Activated naive CD4-positive, alpha-beta T cell treated with anti-CD3 and anti-CD28 coated beads for 36 hours (primary cell): ENCODE measurements at regions of chr15 and their contacts with region 1.

Region 1: GRCh38 chr15:88638626-88639372 is at the start of gene ISG20:
- DNase-seq: peak; percentile 99
- H3K4me3 Mint-ChIP-seq: peak within 1 kb of the TSS; percentile 81
- H3K27ac Mint-ChIP-seq: peak within 1 kb of the TSS; percentile 96
- H3K4me1 Mint-ChIP-seq: peaks cover 79% of the 10 kb centered on the region
- H3K27me3 Mint-ChIP-seq: no peaks in the 10 kb centered on the region
- total RNA-seq, gene ISG20: 51.2 to 56.5 TPM

Region 2: DNA sequence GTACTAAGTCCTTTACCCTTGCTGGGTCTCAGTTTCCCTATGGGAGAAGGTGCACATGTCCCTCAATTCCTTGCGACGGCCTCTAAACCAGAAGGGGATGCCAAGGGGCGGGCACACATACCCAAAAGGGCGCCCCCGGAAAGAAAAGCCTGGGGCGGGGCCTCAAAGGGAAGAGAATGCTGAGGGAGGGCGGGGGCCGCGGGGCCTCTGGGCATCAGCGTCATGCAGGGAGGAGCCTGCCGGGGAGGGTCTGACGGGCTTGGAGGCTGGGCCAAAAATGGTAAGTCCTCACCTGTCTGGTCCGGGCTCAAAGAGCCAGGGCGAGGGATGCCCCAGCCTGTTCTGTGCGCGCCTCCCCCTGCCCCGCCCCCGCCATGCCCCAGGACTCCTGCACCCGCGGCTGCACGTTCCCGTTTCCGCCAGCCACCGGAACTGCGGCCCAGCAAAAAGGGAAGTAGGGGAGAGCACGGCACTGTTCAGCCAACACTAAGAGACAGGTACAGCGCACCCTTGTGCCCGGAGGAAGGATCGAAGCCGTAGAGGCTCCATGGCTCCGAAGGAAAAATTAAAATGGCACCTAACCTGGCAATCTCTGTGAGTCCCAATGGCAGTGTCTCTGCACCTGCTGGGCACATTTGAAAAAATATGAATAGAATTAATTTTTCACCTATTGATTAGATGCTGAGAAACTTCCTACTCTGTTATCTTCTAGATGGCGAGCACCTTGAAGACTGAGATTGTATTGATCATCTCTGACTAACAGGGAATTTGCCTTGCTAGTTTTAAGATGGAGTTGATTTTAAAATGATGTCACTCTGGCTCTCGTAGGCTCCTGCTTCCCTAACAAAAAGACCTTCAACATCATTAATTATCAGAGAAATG is 92.3 kb before region 1 on chr15 and contains the start of gene DET1:
- CTCF ChIA-PET with region 1: no interaction called
- intact Hi-C with region 1: loop called (anchors 1 kb)
- DNase-seq: peak; percentile 98
- H3K4me3 Mint-ChIP-seq: peak within 1 kb of the TSS; percentile 90
- H3K27ac Mint-ChIP-seq: peak within 1 kb of the TSS; percentile 90
- H3K4me1 Mint-ChIP-seq: peaks cover 15% of the 10 kb centered on the region
- H3K27me3 Mint-ChIP-seq: no peaks in the 10 kb centered on the region
- total RNA-seq, gene DET1: 2.0 to 2.9 TPM

Region 3: DNA sequence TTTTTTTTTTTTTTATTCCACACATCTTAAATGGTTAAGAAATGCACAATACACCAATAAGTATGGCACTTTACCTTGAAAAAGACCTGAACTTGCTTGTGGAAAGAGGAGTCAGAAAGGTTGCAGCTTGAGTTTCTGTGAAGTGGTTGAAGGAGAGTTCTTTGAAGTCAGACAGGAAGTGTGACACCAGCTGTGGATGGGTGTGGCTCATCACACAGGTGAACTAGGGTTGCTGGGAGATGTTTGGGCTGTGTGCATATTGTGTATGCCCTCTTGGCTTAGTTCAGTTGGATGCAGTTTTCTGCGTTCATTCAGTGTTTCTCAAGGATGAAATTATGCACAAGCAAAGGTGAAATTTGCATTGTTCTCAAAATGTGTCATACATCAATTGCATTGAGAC is 11.3 kb before region 1 on chr15:
- CTCF ChIA-PET with region 1: interaction called, 23 read pairs
- intact Hi-C with region 1: loop called (anchors 1 kb)
- DNase-seq: peak; percentile 87
- H3K4me3 Mint-ChIP-seq: no peak overlapping the region
- H3K27ac Mint-ChIP-seq: peak overlapping the region; percentile 70
- H3K4me1 Mint-ChIP-seq: peaks cover 92% of the 10 kb centered on the region
- H3K27me3 Mint-ChIP-seq: no peaks in the 10 kb centered on the region